ENCODE measurements at regions of chr14 and their contacts with region 1.

Region 1: DNA sequence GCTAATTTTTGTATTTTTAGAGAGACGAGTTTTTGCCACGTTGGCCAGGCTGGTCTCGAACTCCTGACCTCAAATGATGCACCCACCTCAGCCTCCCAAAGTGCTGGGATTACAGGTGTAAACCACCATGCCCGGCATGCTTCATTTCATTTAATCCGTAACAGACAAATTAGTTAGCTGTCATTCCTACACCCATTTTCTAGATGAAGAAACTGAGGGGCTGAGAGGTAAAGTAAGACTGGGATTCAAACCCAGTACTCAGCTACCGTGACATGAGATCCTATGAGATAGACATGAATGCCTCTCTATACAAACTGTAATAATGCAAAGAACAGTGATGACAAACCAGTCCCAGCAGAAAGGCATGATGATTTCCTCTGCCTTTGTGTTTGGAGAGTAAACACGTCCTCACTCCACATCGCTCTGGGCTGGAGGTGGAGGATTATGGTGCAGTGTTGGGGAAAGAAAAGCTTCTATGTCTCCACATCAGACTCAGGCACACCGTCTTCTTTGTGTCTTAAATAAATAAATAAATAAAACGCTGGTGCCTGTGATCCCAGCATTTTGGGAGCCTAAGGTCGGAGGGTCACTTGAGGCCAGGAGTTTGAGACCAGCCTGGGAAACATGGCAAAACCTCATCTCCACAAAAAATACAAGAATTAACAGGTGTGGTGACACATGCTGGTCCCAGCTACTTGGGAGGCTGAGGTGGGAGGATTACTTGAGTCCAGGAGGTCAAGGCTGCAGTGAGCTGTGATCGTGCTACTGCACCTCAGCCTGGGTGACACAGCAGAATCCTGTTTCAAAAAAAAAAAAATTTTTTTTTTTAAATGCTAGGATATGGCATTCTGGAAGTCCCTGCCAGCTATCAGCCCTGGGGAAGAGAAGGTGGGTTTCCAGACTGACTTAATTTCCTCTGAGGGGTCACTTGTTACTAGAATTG is 10.5 kb downstream of the VSX2 start:
- DNase-seq: no peak
- H3K4me3 ChIP-seq: no peak overlapping the region
- H3K27ac ChIP-seq: no peak overlapping the region
- H3K4me1 ChIP-seq: peaks cover 0 to 8% (median 4%) of the 10 kb centered on the region in 4 donors
- H3K27me3 ChIP-seq: peaks cover 0 to 70% (median 8%) of the 10 kb centered on the region in 4 donors
- CTCF ChIP-seq: no peak
- EP300 ChIP-seq: no peak
- POLR2A ChIP-seq: no peak

Region 2: GRCh38 chr14:74109369-74109768 is 140.3 kb before region 1 on chr14:
- intact Hi-C with region 1: loop called (anchors 5 kb)
- DNase-seq: no peak
- H3K4me3 ChIP-seq: no peak overlapping the region
- H3K27ac ChIP-seq: no peak overlapping the region
- H3K4me1 ChIP-seq: no peaks in the 10 kb centered on the region
- H3K27me3 ChIP-seq: no peaks in the 10 kb centered on the region
- CTCF ChIP-seq: no peak
- EP300 ChIP-seq: no peak
- POLR2A ChIP-seq: no peak

Region 3: GRCh38 chr14:74217672-74218448 is 31.8 kb before region 1 on chr14:
- intact Hi-C with region 1: loop called (anchors 1 kb)
- DNase-seq: no peak
- H3K4me3 ChIP-seq: peak overlapping the region; percentile 6 to 48 (median 39)
- H3K27ac ChIP-seq: no peak overlapping the region
- H3K4me1 ChIP-seq: peaks cover 4 to 11% (median 9%) of the 10 kb centered on the region in 4 donors
- H3K27me3 ChIP-seq: peaks cover 0 to 51% (median 9%) of the 10 kb centered on the region in 4 donors
- CTCF ChIP-seq: peak; percentile 70 to 98 (median 89)
- EP300 ChIP-seq: no peak
- POLR2A ChIP-seq: no peak

Region 4: DNA sequence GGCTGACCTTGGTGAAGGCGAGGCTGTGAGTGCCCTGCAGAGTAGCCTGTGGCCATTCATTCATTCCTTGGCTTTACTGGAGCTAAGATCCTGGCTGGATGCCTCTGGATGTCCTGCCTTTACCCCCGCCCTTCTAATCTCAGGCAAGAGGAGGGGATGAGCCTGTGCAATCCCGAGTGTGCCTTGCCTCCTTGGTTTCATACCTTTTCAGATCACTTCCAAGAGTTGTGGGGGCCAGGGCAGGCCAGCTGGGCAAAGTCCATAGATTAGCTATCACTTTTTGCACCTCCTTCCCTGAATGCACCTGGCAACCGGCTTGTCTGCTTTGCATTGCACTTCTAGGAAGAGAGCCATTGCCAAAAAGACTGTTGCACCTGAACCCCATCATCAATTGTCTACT is 100.1 kb after region 1 on chr14:
- intact Hi-C with region 1: no loop called
- DNase-seq: no peak
- H3K4me3 ChIP-seq: no peak overlapping the region
- H3K27ac ChIP-seq: no peak overlapping the region
- H3K4me1 ChIP-seq: no peaks in the 10 kb centered on the region
- H3K27me3 ChIP-seq: peaks cover 0 to 66% (median 0%) of the 10 kb centered on the region in 4 donors
- CTCF ChIP-seq: no peak
- EP300 ChIP-seq: no peak
- POLR2A ChIP-seq: no peak

Region 5: DNA sequence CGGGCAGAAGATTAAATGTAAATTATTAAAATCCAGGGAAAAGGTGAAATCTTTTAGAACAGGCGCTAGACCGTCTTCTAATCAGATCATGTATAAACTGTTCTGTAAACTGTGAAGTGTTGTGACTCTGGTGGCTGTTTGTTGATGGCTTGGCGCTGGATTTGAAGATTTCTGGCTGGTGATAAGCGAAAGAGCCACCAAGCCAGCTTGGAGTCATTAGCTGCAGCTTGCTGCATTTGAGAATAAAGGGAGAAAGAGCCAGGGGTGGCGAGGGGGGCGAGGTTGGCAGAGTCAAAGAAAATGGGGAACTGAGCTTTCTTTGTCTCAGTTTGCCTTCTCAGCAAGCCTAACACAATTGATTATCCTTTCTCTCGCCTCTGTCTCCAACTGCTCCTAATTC is 168.3 kb after region 1 on chr14:
- intact Hi-C with region 1: no loop called
- DNase-seq: no peak
- H3K4me3 ChIP-seq: no peak overlapping the region
- H3K27ac ChIP-seq: no peak overlapping the region
- H3K4me1 ChIP-seq: no peaks in the 10 kb centered on the region
- H3K27me3 ChIP-seq: peaks cover 0 to 64% (median 0%) of the 10 kb centered on the region in 4 donors
- CTCF ChIP-seq: no peak
- EP300 ChIP-seq: no peak
- POLR2A ChIP-seq: no peak

Region 6: DNA sequence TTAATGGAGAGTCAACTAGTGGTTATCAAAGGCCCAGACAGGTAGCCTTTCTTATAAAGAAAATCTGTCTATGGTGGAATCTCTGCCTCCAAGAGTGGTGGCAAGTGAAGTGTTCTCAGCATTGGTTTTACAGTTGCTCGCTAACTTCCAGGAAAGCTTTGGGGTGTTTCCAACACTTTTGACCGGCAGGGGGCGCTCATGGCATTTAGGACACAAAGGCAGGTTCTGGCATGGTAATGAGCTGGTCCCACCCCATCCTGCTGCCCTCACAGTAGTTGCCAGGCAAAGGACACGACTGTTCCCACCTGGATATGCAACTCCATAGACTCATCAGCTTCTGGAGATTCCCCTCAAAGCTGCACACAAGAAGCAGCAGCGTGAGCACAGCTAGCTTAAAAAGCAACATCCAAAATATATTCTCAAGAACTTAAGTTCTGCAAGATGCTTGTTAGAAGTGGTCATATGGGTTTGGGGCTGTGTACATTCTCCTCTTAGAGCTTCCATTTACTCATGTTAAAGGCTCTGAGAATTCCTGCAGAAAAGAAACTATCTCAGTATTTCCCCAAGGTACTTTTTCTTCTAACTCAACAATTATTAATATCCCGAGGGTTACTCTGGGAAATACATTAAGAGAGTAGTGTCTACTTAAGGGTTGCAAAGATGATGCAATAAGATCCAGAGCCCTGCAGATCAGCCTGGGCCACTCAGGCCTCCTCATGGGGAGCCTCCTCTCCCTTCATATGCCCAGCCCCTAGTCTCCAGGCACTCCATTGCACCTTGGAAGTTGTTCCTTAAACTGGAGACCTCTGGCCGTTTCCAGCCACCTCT is 611.4 kb after region 1 on chr14:
- intact Hi-C with region 1: no loop called
- DNase-seq: peak; percentile 98
- H3K4me3 ChIP-seq: no peak overlapping the region
- H3K27ac ChIP-seq: no peak overlapping the region
- H3K4me1 ChIP-seq: peaks cover 0 to 10% (median 10%) of the 10 kb centered on the region in 4 donors
- H3K27me3 ChIP-seq: no peaks in the 10 kb centered on the region
- CTCF ChIP-seq: peak; percentile 82 to 90 (median 86)
- EP300 ChIP-seq: no peak
- POLR2A ChIP-seq: no peak